ENCODE measurements at regions of chr1 and their contacts with region 1.

Region 1: GRCh38 chr1:226074046-226074445 is 11.5 kb downstream of the H3-3A start:
- DNase-seq: no peak

Region 2: GRCh38 chr1:226157761-226158316 is 83.8 kb after region 1 on chr1:
- CTCF ChIA-PET with region 1: no interaction called
- POLR2A ChIA-PET with region 1: no interaction called
- DNase-seq: no peak

Region 3: GRCh38 chr1:226195144-226195543 is 121.1 kb after region 1 on chr1:
- CTCF ChIA-PET with region 1: interaction called, 12 read pairs
- POLR2A ChIA-PET with region 1: no interaction called
- DNase-seq: no peak

Measured in HEK293T (cell line).